AG04450 (cell line): ENCODE measurements at regions of chr5 and their contacts with region 1.

Region 1: DNA sequence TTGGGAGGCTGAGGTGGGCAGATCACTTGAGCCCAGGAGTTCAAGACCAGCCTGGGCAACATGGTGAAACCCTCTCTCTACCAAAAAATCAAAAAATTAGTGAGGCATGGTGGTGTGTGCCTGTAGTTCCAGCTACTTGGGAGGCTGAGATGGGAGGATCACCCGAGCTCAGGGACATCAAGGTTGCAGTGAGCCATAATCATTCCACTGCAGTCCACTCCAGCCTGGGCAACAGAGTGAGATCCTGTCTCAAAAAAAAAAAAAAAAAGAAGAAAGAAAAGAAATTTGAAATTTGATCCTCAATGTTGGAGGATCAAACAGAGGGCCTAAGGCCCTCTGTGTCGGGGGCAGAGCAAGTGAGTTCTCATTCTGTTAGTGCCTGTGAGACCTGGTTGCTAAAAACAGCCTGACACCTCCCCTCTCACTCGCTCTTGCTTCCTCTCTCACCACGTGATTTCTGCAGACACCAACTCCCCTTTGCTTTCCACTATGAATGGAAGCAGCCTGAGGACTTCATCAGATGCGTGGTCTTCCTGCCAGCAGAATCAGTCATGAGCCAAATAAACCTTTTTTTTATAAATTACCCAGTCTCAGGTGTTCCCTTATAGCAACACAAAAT is 8.5 kb upstream of the GOLPH3 start:
- DNase-seq: no peak
- H3K4me3 ChIP-seq: no peak overlapping the region
- H3K27ac ChIP-seq: no peak overlapping the region
- H3K27me3 ChIP-seq: no peaks in the 10 kb centered on the region
- CTCF ChIP-seq: no peak

Region 2: DNA sequence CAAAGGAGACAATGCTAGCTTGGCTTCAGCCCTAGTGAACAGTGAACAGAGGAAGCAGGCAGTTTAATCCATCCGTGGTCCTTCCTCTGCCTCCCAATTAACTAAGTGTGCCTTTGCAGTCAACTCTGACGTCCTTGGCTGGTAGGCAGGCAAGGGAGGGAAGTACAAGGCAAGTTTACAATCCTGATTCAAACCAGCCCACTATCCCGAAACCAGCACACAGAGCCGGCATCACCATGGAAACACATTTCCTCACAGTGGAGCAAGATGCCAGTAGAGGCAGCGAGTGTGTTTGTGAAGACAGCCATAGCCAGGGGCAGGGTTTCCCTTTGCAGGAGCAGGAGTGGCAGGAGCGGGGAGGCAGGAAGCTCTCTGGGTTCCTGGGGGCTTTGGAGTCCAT is 82.3 kb before region 1 on chr5:
- CTCF ChIA-PET with region 1: no interaction called
- POLR2A ChIA-PET with region 1: interaction called, 12 read pairs
- DNase-seq: no peak
- H3K4me3 ChIP-seq: no peak overlapping the region
- H3K27ac ChIP-seq: no peak overlapping the region
- H3K27me3 ChIP-seq: no peaks in the 10 kb centered on the region
- CTCF ChIP-seq: no peak